ENCODE measurements at regions of chr10 and their contacts with region 1.

Region 1: DNA sequence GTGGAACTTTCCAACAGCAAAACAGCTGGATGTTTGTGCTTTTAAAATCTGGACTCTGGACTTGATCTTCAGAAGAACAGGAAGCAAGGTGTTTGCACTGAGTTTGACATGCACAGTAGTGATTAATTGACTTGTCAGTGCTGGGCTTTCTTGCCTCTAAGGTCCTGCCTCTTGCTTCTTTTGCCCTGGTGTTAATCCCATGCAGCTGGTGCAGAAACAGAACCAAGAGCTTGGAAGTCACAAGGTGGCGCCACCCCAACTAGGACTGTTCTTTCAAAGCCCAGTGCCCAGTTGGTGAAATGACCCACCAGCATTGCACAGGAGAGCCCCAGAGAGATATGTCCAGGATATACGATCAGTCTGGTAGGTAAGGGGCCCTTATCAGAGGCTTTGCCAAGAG is 66.8 kb upstream of the SEPHS1 start:
- DNase-seq: peak; percentile 25
- H3K4me3 ChIP-seq: no peak overlapping the region
- H3K27ac ChIP-seq: no peak overlapping the region
- H3K4me1 ChIP-seq: no peaks in the 10 kb centered on the region
- H3K27me3 ChIP-seq: peaks cover 2 to 3% of the 10 kb centered on the region in 2 experiments
- CTCF ChIP-seq: peak; percentile 18 to 57
- POLR2A ChIP-seq: no peak

Region 2: DNA sequence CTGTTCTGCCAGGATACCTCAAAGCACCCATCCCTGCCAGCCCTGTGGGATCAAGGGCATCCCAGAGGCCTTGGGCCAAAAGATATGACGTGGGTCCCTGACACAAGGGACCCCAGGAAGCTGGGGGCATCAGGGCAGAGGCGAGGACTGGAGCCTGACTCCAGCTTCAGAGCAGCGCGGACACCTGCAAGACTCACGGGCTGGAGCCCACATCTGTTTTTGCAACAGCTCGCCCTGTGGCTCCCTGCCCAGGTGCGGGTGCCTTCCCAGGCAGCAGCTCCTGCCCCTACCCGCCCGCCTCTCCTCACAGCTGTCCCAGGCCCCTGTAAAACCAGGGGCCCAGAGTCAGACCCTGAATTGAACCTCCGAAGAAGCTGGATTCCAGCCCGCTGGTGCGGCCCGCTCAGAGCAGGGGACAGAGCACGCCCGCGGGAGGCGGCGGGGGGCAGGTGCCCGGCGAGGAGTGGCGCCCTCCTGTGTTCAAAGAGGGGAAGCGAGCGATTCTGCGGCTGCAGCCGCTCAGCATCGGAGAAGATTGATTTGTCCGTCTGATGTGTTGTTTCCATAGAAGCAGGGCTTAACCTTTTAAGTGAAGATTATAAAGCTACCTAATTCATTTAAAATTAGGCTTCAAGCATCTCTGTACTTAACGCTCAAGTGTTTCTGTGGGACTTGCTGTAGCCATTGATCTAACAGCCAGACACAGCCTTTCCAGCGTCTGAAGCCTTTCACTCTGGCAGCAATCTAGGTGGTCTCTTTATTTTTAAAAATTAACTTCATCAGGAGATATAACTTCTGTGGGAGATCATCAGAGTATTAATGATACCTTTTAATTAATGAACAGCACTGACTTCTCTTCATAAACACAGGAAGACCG is 25.5 kb after region 1 on chr10:
- CTCF ChIA-PET with region 1: interaction called, 12 read pairs
- POLR2A ChIA-PET with region 1: no interaction called
- dilution Hi-C with region 1: no loop called
- intact Hi-C with region 1: no loop called
- DNase-seq: peak; percentile 52
- H3K4me3 ChIP-seq: no peak overlapping the region
- H3K27ac ChIP-seq: no peak overlapping the region
- H3K4me1 ChIP-seq: peaks cover 7% of the 10 kb centered on the region
- H3K27me3 ChIP-seq: peaks cover 11 to 27% of the 10 kb centered on the region in 2 experiments
- CTCF ChIP-seq: peak; percentile 89 to 96
- POLR2A ChIP-seq: no peak